AG04449 (cell line): ENCODE measurements at regions of chr3 and their contacts with region 1.

Region 1: GRCh38 chr3:114383875-114384557 is 90.2 kb downstream of the TIGIT start:
- DNase-seq: peak; percentile 38
- H3K4me3 ChIP-seq: peak overlapping the region; percentile 48
- CTCF ChIP-seq: peak; percentile 90

Region 2: DNA sequence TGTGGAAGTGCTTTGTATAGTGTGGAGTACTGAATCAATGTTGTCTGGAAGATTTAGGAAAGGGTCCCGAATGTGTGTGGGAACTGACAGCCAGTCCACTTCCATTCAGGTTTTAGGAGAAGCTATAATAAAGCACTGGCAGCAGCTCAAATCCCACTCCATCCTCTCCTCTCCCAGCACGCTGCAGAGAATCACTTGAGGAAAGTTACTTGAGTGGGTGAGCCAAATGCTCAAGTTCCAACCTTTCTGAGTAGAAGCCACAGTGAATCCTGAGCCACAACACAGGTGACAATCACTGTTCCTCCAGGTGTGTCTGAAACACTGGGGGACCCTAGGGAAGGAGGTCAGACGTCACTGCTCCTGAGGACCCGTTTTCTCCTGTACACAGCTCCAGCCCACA is 16.4 kb after region 1 on chr3:
- CTCF ChIA-PET with region 1: interaction called, 11 read pairs
- POLR2A ChIA-PET with region 1: no interaction called
- DNase-seq: no peak
- H3K4me3 ChIP-seq: no peak overlapping the region
- CTCF ChIP-seq: no peak

Region 3: DNA sequence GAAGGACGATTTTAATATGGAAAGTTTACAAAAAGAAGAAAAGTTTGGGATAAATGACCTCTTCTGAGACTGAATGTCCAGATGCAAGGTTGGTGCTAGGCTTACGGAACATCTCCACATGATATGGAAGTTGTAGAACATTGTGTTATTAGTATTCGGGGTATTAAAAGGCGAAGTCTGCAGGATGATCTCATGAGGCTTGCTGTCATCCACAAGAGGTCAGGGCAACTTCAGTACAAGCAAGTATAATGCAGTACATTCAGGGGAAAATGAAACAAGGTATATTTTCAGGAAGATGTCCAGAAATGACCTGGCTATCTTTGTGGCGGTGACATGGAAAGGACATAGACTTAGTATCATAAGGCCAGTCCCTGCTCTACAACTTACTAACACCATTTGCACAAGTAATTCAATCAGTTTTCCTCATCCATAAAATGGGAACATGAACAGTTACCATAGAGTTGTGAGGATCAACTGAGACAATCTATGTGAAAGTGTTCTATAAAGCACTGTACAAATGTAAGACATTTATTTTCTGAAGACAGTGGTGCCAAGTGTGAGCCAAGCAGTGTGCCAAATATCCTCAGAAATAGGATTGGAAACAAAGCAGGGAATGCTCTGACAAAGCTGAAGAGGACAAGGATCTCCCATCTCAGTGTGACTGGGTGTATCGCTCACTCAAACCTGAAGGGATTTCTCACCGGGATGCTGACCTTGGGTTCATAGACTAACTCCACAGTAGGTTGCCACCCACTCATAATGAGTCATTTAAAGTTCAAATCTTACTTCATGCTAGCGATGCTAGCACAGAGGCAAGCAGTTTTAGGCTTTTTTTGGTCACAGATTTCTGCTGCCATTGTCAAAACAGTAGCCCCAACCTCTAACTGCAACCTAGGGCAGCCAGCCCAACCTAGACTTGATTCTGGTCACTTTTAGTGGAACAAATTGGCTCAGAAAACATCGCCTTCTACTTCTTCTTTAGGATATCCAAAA is 28.1 kb after region 1 on chr3:
- CTCF ChIA-PET with region 1: interaction called, 121 read pairs
- POLR2A ChIA-PET with region 1: no interaction called
- DNase-seq: no peak
- H3K4me3 ChIP-seq: no peak overlapping the region
- CTCF ChIP-seq: no peak

Region 4: DNA sequence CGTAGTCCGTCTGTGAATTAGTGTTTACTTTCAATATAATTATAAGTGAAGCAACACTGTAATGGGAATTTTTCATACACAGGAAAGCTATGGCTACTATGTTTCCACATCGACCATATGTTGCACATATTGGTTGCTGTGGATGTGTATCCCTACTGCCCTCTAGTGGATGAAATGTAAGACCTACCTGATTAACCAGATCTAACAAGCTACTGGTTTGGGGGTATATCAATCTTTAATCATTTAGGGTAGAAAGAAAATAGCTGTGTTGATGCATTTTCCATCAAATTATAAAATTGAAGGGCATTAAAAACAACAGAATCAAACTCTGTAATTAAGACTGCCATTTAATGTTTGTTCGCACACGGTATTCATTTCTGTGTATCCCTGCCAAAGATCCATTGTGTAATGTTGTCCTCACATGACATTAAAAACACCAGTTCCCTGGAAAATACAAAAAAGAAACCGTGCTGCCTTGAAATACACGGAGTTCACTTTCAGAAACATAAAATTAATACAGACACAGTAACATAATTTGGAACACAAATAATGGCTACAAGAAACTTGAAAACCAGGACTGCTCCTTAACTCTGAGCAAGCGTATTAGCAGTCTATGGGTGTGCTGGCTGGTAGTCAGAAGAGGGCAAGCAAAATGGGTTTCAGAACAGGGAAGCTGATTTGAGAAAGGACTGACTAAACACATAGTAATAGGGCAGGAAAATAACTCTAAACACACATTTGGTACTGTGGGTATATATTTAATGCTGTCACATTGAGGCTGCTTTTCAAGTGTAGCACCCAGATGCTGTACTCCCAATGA is 34.9 kb after region 1 on chr3:
- CTCF ChIA-PET with region 1: interaction called, 121 read pairs
- POLR2A ChIA-PET with region 1: no interaction called
- DNase-seq: peak; percentile 78
- H3K4me3 ChIP-seq: no peak overlapping the region
- CTCF ChIP-seq: peak; percentile 61

Region 5: DNA sequence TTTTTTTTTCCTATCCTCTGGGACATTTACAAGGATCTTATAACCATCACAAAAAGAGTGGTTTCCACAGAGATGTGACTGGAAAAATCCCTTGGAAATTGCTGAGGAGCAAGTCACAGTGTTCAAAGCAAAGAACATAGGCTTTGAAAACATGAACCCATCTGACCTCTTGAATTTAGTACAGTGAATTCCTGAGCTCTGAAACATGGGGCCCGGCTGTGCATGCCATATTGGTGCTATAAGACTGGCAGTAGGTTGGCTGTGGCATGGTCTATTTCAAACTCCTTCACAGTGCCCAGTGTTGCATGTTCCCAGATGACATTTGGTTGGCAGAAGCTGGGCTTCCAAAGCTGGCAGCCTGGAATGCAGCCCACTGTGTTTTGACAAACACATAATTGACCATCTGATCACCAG is 112.0 kb after region 1 on chr3:
- CTCF ChIA-PET with region 1: no interaction called
- POLR2A ChIA-PET with region 1: no interaction called
- DNase-seq: peak; percentile 41
- H3K4me3 ChIP-seq: no peak overlapping the region
- CTCF ChIP-seq: no peak

Region 6: GRCh38 chr3:115092220-115092791 is 708.3 kb after region 1 on chr3:
- CTCF ChIA-PET with region 1: interaction called, 19 read pairs
- POLR2A ChIA-PET with region 1: no interaction called
- DNase-seq: no peak
- H3K4me3 ChIP-seq: no peak overlapping the region
- CTCF ChIP-seq: peak; percentile 87